ENCODE measurements at regions of chr4 and their contacts with region 1.

Region 1: DNA sequence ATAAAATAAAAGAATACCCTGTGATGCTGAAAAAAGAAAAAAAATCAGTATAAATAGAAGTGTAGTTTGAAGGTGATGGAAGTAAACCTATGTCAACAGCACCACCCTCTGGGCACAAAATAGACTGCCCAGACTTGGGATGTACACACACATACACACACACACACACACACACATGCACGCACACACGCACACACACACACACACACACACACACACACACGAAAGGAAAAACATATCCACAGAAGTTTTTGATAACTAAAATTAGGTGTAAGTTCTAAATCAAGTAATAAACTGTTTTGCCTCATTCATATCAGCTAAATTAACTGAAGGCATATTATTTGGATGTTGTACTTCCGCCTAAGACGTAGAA is 40.5 kb downstream of the ANXA5 start:
- DNase-seq: peak; percentile 50
- H3K4me3 ChIP-seq: no peak overlapping the region
- H3K27ac ChIP-seq: no peak overlapping the region
- H3K4me1 ChIP-seq: no peaks in the 10 kb centered on the region
- H3K27me3 ChIP-seq: no peaks in the 10 kb centered on the region
- CTCF ChIP-seq: peak; percentile 51 to 59

Region 2: GRCh38 chr4:121192480-121192879 is 463.8 kb before region 1 on chr4:
- CTCF ChIA-PET with region 1: no interaction called
- dilution Hi-C with region 1: no loop called
- in situ Hi-C with region 1: loop called in 1 of 2 experiments (anchors 25 kb)
- intact Hi-C with region 1: loop called (anchors 1 kb)
- DNase-seq: peak; percentile 35
- H3K4me3 ChIP-seq: peak overlapping the region in 2 of 3 experiments; percentile 2 to 31
- H3K27ac ChIP-seq: no peak overlapping the region
- H3K4me1 ChIP-seq: peaks cover 5% of the 10 kb centered on the region
- H3K27me3 ChIP-seq: peaks cover 3% of the 10 kb centered on the region
- CTCF ChIP-seq: peak; percentile 74 to 79

Region 3: DNA sequence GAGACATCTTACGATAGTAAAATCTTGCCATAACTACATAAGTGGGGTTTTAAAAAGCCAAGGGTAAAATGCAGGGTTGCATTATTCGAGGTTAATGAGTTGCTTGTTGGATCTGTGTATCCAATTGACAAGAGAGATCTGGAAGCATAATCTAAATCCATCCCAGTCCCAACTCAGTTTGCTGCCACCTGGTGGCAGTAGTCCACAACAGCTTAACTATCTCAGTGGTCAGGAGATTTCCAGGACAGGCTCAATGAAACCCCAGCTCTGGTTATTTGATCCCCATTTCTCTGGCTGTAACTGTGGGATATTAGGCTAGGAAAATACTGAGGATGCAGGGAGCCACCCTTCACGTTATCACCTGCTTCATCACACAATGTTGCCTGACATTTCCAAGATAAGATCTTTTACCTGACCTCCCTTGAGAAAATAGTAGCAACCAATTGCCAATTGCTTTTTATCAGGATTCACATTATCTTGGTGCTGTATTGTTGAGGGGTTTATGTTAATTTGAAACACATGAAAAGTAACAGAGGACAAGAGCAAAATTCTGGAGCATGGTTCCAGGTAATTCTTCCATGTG is 403.9 kb before region 1 on chr4:
- CTCF ChIA-PET with region 1: no interaction called
- dilution Hi-C with region 1: no loop called
- in situ Hi-C with region 1: no loop called
- intact Hi-C with region 1: loop called (anchors 1 kb)
- DNase-seq: peak; percentile 55
- H3K4me3 ChIP-seq: no peak overlapping the region
- H3K27ac ChIP-seq: no peak overlapping the region
- H3K4me1 ChIP-seq: peaks cover 15% of the 10 kb centered on the region
- H3K27me3 ChIP-seq: no peaks in the 10 kb centered on the region
- CTCF ChIP-seq: peak; percentile 90

Region 4: DNA sequence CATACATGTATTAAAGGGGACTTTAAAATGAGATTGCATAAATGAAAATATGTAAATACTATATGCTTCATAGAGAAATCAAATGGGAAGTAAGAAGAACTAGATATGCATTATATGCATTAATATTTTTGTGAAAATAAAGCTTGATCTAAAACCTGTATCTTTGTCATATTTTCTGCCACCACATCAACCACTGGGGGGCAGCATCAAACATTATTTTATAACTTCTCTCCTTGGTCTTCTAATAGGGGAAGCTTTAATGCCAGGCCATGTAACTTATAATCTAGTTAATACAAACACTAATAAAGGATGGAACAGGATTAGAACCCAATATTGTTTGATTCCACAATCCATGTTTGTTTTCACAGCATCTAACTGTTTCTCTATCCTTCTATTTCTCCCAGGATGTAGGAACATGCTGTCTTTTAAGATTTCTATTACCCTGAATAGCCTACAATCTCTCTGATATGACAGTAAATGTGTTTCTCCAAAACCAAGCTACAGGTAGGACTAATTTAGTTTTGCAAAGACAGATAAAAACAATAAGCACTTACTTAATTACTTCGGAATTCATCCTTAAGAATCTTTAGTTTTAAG is 285.4 kb before region 1 on chr4:
- CTCF ChIA-PET with region 1: no interaction called
- dilution Hi-C with region 1: no loop called
- in situ Hi-C with region 1: loop called in 1 of 2 experiments (anchors 25 kb)
- intact Hi-C with region 1: loop called (anchors 2 kb)
- DNase-seq: peak; percentile 28
- H3K4me3 ChIP-seq: no peak overlapping the region
- H3K27ac ChIP-seq: no peak overlapping the region
- H3K4me1 ChIP-seq: peaks cover 30% of the 10 kb centered on the region
- H3K27me3 ChIP-seq: no peaks in the 10 kb centered on the region
- CTCF ChIP-seq: peak; percentile 59 to 71

Region 5: DNA sequence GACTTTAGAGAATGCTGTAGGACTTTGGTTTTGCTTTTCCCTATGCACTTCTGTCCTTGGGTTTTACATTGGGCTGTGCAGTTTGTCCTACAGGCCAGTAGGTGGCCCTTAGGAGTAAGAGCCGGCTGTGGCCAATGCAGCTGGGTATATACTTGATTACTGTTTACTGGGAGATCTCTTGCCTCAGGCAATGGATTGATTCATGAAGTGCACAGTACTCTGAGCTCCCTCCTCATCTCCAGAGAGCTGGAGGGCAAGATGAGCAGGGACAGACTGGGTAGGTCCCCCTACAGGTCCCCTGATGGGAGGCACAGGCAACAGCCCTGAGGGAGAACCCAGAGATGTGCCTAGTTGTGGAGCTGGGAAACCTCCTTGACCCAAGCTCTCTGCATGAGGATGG is 171.6 kb before region 1 on chr4:
- CTCF ChIA-PET with region 1: interaction called, 3 read pairs
- dilution Hi-C with region 1: no loop called
- in situ Hi-C with region 1: no loop called
- intact Hi-C with region 1: loop called (anchors 1 kb)
- DNase-seq: peak; percentile 50
- H3K4me3 ChIP-seq: no peak overlapping the region
- H3K27ac ChIP-seq: no peak overlapping the region
- H3K4me1 ChIP-seq: peaks cover 13% of the 10 kb centered on the region
- H3K27me3 ChIP-seq: no peaks in the 10 kb centered on the region
- CTCF ChIP-seq: peak; percentile 74

Region 6: GRCh38 chr4:121706595-121707021 is 50.4 kb after region 1 on chr4:
- CTCF ChIA-PET with region 1: no interaction called
- dilution Hi-C with region 1: no loop called
- in situ Hi-C with region 1: no loop called
- intact Hi-C with region 1: no loop called
- DNase-seq: peak; percentile 46
- H3K4me3 ChIP-seq: no peak overlapping the region
- H3K27ac ChIP-seq: no peak overlapping the region
- H3K4me1 ChIP-seq: peaks cover 16% of the 10 kb centered on the region
- H3K27me3 ChIP-seq: no peaks in the 10 kb centered on the region
- CTCF ChIP-seq: no peak

Region 7: GRCh38 chr4:121736735-121737351 is 80.6 kb after region 1 on chr4:
- CTCF ChIA-PET with region 1: no interaction called
- dilution Hi-C with region 1: no loop called
- in situ Hi-C with region 1: no loop called
- intact Hi-C with region 1: loop called (anchors 5 kb)
- DNase-seq: peak; percentile 47
- H3K4me3 ChIP-seq: no peak overlapping the region
- H3K27ac ChIP-seq: no peak overlapping the region
- H3K4me1 ChIP-seq: no peaks in the 10 kb centered on the region
- H3K27me3 ChIP-seq: no peaks in the 10 kb centered on the region
- CTCF ChIP-seq: peak; percentile 59 to 67

Region 8: GRCh38 chr4:121764707-121765593 is 108.7 kb after region 1 on chr4 and contains the start of gene SMIM43:
- CTCF ChIA-PET with region 1: no interaction called
- dilution Hi-C with region 1: no loop called
- in situ Hi-C with region 1: no loop called
- intact Hi-C with region 1: no loop called
- DNase-seq: peak; percentile 18
- H3K4me3 ChIP-seq: peak within 1 kb of the TSS; percentile 28 to 53 (median 50)
- H3K27ac ChIP-seq: no peak within 1 kb of the TSS
- H3K4me1 ChIP-seq: no peaks in the 10 kb centered on the region
- H3K27me3 ChIP-seq: peaks cover 2% of the 10 kb centered on the region
- CTCF ChIP-seq: no peak
- total RNA-seq, gene SMIM43: not detected

Measured in mammary epithelial cell (primary cell).